HepG2 (cell line): ENCODE measurements at regions of chr17 and their contacts with region 1.

Region 1: GRCh38 chr17:68794636-68795434 is 160.4 kb downstream of the ABCA8 start:
- DNase-seq: peak; percentile 41
- ATAC-seq: no peak; the same call in 2 of the 3 replicates
- H3K4me3 ChIP-seq: no peak overlapping the region
- H3K27ac ChIP-seq: peak overlapping the region; percentile 97
- H3K4me1 ChIP-seq: peaks cover 62% of the 10 kb centered on the region
- H3K27me3 ChIP-seq: no peaks in the 10 kb centered on the region
- CTCF ChIP-seq: no peak
- EP300 ChIP-seq: no peak
- POLR2A ChIP-seq: no peak
- RAD21 ChIP-seq: no peak

Region 2: GRCh38 chr17:68821860-68822696 is 27.2 kb after region 1 on chr17:
- CTCF ChIA-PET with region 1: no interaction called
- POLR2A ChIA-PET with region 1: interaction called, 37 read pairs
- in situ Hi-C with region 1: no loop called
- intact Hi-C with region 1: loop called (anchors 1 kb)
- DNase-seq: peak; percentile 99
- ATAC-seq: peak; percentile 85
- H3K4me3 ChIP-seq: peak overlapping the region in 2 of 3 experiments; percentile 53 to 57; a peak in 3 of 6 replicates
- H3K27ac ChIP-seq: peak overlapping the region; percentile 91
- H3K4me1 ChIP-seq: peaks cover 79% of the 10 kb centered on the region
- H3K27me3 ChIP-seq: no peaks in the 10 kb centered on the region
- CTCF ChIP-seq: no peak
- EP300 ChIP-seq: peak; percentile 81 to 97; a peak in 3 of 4 replicates
- POLR2A ChIP-seq: no peak
- RAD21 ChIP-seq: no peak

Region 3: GRCh38 chr17:68937890-68938514 is 143.2 kb after region 1 on chr17:
- CTCF ChIA-PET with region 1: no interaction called
- POLR2A ChIA-PET with region 1: no interaction called
- in situ Hi-C with region 1: no loop called
- intact Hi-C with region 1: loop called (anchors 1 kb)
- DNase-seq: peak; percentile 82
- ATAC-seq: peak; percentile 100
- H3K4me3 ChIP-seq: peak overlapping the region in 2 of 3 experiments; percentile 2 to 42; a peak in 2 of 6 replicates
- H3K27ac ChIP-seq: peak overlapping the region; percentile 69
- H3K4me1 ChIP-seq: peaks cover 44% of the 10 kb centered on the region
- H3K27me3 ChIP-seq: no peaks in the 10 kb centered on the region
- CTCF ChIP-seq: peak; percentile 14; the same call in 1 of the 2 replicates
- EP300 ChIP-seq: peak in 1 of 2 experiments; percentile 82; a peak in 2 of 4 replicates
- POLR2A ChIP-seq: no peak
- RAD21 ChIP-seq: no peak